H1 (cell line): ENCODE measurements at regions of chr5 and their contacts with region 1.

Region 1: DNA sequence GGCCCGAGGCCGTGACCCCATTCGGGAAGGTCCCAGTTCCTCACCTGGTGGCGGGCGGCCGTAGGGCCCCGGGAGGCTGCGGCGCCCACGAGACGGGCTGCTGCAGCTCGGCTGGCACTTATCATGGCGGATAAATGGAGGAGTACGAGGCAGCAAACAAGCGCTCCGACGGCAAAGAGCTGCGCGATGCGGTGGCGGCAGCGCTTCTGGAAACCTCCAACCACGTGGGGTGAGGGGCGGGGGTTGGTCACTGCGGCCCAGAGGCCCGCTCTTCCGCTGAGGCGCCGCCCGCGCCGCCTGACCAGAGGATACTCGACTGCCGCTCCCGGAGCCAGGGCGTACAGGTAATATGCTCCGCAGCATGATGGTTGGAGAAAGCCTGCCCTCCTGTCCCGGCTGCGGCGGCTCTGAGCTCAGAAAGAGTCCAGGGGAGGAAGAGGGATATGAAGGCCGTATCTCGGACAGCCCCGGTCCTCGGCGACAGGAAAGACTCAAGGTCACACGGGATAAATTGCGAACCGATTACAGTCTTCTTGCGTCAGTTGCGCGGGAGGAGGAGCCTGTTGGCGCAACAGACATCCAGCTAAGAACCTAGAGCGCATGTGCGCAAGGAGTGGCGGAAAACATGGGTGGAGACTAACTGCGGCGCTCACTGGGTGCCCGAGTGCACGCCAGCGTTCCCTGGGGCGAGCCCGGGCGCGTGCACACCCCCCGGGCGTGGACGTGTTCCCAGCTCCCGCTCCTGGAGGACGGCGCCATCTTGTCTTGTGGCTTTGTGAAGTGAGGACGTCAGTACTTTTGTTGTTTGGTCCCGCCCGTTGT is at the start of gene HSPA9:
- DNase-seq: peak; percentile 95 to 97
- H3K4me3 ChIP-seq: peak within 1 kb of the TSS; percentile 82 to 98 (median 92)
- H3K27ac ChIP-seq: peak within 1 kb of the TSS; percentile 100
- H3K4me1 ChIP-seq: peaks cover 0 to 3% (median 0%) of the 10 kb centered on the region in 4 experiments; a peak in 3 of 7 replicates
- H3K27me3 ChIP-seq: no peaks in the 10 kb centered on the region
- CTCF ChIP-seq: no peak
- EP300 ChIP-seq: peak in 1 of 2 experiments; percentile 30; a peak in 1 of 3 replicates
- POLR2A ChIP-seq: peak; percentile 80 to 87
- RAD21 ChIP-seq: no peak
- total RNA-seq, gene HSPA9: 395 and 396 TPM in 2 replicates

Region 2: DNA sequence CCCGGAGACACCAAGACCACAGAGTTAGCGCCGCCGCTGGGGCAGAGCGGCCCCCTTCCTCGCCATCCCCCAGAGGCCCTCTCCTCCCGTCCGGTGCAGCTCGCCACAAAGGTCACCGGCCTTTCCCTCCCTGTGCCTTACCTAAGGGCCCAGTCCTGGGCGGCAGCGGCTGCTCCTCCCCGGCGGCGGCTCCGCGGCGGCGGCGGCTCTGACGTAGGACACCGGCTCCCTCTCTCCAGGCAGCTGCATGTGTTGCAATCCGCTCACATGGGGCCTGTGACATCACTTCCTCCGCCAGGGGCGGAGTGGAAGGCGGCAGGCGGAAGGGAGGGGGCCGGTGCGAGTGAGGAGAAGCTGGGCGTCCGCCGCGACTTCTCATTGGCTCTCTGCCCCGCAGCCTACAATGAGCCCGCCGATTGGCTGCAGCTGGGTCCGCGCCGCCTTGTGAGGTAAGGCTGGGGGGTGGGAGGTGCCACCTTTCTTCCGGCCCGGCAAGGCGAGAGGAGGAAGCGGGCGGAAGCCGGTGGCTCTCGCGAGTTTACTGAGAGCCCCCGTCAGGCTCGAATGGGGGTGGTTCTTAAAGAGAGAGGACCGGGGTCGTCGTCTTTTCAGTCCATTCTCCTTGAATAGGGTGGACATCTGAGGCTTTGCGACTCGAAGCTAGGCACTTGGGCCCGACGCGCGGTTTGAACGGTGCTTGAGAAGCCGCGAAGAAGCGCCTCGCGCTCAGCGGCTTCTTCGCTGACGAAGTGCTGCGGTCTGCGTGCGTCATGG is 32.3 kb before region 1 on chr5 and contains the start of gene ETF1:
- CTCF ChIA-PET with region 1: interaction called, 5 read pairs
- POLR2A ChIA-PET with region 1: interaction called, 1,018 read pairs
- DNase-seq: peak; percentile 98
- H3K4me3 ChIP-seq: peak within 1 kb of the TSS; percentile 89 to 100 (median 95)
- H3K27ac ChIP-seq: peak within 1 kb of the TSS; percentile 100
- H3K4me1 ChIP-seq: peaks cover 0 to 16% (median 2%) of the 10 kb centered on the region in 4 experiments; a peak in 4 of 7 replicates
- H3K27me3 ChIP-seq: no peaks in the 10 kb centered on the region
- CTCF ChIP-seq: no peak
- EP300 ChIP-seq: peak in 1 of 2 experiments; percentile 72; a peak in 2 of 3 replicates
- POLR2A ChIP-seq: peak; percentile 77 to 82
- RAD21 ChIP-seq: no peak
- total RNA-seq, gene ETF1: 168 TPM in 2 replicates

Region 3: DNA sequence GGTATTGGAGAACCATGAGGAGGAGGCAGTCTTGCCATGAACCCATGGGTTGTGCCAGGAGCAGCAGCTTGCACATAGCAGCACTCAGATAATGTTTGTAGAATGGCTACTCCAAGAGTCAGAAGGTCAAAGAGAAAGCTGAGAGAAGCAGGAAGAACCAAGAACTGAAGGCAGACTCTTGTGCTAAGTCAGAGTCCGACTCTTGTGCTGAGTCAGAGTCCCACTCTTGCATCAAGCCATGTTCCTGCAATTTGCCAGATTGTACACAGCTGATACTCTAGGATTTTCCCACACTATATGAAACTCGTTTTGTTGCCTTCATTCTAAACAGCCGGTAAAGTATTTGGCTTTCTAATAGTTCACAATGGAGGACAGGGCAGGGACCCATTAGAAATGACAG is 26.0 kb after region 1 on chr5:
- CTCF ChIA-PET with region 1: interaction called, 40 read pairs
- POLR2A ChIA-PET with region 1: interaction called, 9 read pairs
- DNase-seq: no peak
- H3K4me3 ChIP-seq: no peak overlapping the region
- H3K27ac ChIP-seq: no peak overlapping the region
- H3K4me1 ChIP-seq: no peaks in the 10 kb centered on the region; a peak in 1 of 7 replicates
- H3K27me3 ChIP-seq: no peaks in the 10 kb centered on the region
- CTCF ChIP-seq: no peak
- EP300 ChIP-seq: no peak
- POLR2A ChIP-seq: no peak
- RAD21 ChIP-seq: no peak

Region 4: DNA sequence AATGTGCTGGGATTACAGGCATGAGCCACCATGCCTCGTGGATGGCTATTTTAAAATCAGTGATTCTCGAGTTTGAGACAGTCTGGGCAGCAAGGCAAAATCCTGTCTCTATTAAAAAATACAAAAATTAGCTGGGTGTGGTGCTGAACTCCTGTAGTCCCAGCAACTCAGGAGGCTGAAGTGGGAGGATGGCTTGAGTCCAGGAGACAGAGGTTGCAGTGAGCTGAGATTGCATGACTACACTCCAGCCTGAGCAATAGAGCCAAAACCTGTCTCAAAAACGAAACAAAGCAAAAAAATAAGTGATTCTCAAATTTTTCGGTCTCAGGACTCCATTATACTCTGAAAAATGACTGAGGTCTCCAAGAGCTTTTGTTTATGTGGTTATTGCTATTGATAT is 47.6 kb after region 1 on chr5:
- CTCF ChIA-PET with region 1: interaction called, 3 read pairs
- POLR2A ChIA-PET with region 1: interaction called, 13 read pairs
- DNase-seq: no peak
- H3K4me3 ChIP-seq: no peak overlapping the region
- H3K27ac ChIP-seq: no peak overlapping the region
- H3K4me1 ChIP-seq: peaks cover 0 to 6% (median 1%) of the 10 kb centered on the region in 4 experiments; a peak in 2 of 7 replicates
- H3K27me3 ChIP-seq: no peaks in the 10 kb centered on the region
- CTCF ChIP-seq: no peak
- EP300 ChIP-seq: no peak
- POLR2A ChIP-seq: no peak
- RAD21 ChIP-seq: no peak

Region 5: DNA sequence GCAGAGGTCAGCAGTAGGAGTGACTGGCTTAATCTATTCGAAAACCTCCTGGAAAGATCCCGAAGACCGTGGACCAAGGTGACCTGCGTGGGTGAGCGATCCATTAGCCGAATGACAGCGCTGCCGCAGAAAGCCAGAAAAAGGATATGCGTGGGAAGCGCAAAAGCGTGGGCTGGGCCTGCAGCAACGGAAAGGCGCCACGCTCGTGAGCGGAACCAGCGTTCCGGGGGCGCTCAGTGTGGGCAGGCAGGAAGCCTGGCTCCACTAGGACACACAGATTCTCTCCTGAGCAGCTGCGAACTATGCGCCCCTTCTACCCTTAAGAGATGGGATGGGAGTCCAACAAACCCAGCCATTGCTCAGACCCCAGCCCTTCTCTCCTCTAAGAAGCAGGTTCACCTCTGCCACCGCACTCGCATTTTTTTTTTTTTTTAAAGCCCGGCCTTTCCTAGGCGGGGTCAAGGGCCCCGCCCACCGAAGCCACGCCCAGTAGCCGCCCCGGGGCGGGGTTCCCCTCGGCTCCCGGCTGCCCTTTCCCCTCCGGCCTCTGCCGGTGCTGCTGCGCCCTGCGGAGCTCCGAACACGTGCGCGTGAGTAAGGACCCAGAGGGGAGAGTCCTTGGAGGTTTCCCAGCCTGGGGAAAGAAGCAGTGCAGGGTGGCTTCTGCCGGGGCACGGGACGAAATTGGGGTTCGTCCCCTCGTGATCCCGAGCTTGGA is 698.3 kb after region 1 on chr5:
- CTCF ChIA-PET with region 1: interaction called, 5 read pairs
- POLR2A ChIA-PET with region 1: interaction called, 23 read pairs
- DNase-seq: peak; percentile 82 to 97
- H3K4me3 ChIP-seq: peak overlapping the region; percentile 90 to 100 (median 95)
- H3K27ac ChIP-seq: peak overlapping the region; percentile 92
- H3K4me1 ChIP-seq: peaks cover 14 to 27% (median 22%) of the 10 kb centered on the region in 4 experiments
- H3K27me3 ChIP-seq: no peaks in the 10 kb centered on the region
- CTCF ChIP-seq: no peak
- EP300 ChIP-seq: 0 out of 3 replicates have a peak, but pooled peaks of 1 of the 2 experiments have one; percentile 5
- POLR2A ChIP-seq: peak; percentile 90 to 95
- RAD21 ChIP-seq: peak in 1 of 2 experiments; percentile 2; a peak in 1 of 4 replicates